ENCODE measurements at regions of chr6 and their contacts with region 1.

Region 1: GRCh38 chr6:134575221-134575620 is 257.3 kb upstream of the SGK1 start:
- DNase-seq: no peak
- H3K4me3 ChIP-seq: no peak overlapping the region
- H3K27ac ChIP-seq: no peak overlapping the region
- H3K4me1 ChIP-seq: no peaks in the 10 kb centered on the region
- H3K27me3 ChIP-seq: no peaks in the 10 kb centered on the region
- CTCF ChIP-seq: no peak

Region 2: DNA sequence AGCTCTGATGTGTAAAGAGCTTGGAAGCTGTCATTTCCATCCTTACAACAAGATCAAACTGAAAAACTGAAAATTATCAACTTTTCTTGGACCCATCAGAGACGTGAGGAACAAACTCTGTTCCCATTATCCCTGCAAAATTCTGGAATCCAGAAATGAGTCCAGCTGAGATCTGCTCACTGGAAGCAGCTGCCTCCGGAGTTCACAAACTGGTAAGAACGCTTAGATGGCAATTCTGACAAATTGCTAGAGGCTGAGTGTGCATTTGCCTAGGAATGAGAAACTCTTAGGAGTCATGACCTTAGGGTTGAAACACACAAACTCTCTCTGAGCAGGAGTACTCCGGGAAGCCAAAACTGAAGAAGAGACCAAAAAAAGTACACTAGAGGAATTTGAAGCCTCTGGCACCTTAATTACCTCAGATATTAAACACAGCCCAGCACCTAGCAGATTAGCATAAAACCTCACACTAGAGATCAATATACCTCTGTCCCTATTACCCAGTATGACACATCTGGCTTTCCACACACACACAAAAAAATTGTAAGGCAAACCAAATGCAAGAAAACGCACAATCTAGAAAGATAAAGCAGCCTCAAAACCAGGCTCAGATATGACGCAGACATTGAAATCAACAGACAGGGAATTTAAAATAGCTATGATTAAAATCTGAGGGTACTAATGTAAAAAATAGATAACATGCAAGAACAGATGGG is 23.8 kb before region 1 on chr6:
- intact Hi-C with region 1: loop called (anchors 1 kb)
- DNase-seq: no peak
- H3K4me3 ChIP-seq: no peak overlapping the region
- H3K27ac ChIP-seq: no peak overlapping the region
- H3K4me1 ChIP-seq: no peaks in the 10 kb centered on the region
- H3K27me3 ChIP-seq: no peaks in the 10 kb centered on the region
- CTCF ChIP-seq: no peak